Posterior vena cava (tissue), 2 donors: ENCODE measurements at regions of chr14 and their contacts with region 1.

Region 1: DNA sequence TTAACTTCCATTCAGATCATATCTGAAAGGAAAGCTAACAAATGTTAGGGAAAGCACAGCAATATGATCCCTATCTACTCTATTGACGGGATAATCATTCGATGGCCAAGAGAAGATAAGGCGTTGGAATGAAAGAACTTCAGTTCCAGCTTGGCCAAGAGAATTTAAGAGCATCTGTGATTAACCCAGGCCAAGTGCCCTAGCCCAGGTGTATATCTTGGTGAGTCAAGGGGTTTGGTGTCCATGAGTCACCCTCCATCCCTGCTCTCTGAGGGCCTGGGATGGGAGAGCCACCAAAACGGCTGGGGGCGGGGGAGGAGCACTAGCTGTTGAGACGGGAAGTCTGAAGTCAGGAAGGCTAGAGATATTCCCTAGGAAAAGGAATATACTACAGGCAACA is 13.0 kb downstream of the TBPL2 start:
- DNase-seq: no peak

Region 2: DNA sequence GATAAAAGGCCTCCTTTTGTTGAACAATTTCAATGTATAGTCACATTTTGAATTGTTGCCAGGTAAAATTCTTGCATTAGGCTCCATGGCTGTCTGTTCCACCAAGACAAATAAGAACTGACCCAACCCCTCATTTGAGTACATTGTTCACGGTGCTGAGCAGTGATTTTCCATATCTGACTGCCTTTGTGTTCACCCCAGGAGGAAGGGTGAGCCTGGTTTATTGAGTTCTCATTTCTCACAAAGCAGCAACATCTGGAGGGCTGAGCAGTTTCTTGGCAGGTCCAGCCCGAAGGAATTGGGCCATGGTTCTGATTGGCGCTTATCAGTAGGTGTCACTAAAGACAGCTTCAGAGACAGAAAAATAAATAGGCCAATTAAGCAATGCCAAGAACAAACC is 1619.9 kb before region 1 on chr14:
- intact Hi-C with region 1: no loop called
- DNase-seq: no peak

Region 3: DNA sequence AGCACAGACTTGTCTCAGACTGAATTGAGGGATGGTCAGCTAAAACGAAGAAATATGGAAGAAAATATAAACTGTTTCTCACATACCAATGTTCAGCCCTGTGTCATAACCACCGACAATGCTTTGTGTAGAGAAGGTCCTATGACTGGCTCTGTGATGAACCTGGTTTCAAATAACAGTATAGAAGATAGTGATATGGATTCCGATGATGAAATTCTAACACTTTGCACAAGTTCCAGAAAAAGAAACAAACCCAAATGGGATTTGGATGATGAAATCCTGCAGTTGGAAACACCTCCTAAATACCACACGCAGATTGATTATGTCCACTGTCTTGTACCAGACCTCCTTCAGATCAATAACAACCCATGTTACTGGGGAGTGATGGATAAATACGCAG is 383.9 kb before region 1 on chr14:
- intact Hi-C with region 1: no loop called
- DNase-seq: no peak

Region 4: DNA sequence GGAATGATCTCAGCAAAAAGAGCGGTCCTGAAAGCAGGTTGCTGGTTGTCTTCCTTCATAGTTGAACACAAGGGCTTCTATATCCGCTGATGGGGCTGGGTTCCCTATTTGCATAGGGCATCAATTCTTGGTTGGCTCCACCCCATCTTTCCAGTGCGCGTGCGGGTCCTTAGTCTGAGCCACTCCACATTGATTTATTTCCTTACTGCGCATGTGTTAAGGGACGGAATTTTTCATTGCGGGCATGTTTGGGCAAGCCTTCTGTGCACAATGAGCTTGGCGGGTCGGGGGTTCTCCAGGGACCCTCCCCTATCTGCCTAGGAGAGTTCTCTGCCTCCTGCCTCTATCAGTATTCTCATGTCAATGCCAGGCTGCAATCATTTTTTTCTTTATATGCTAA is 214.8 kb before region 1 on chr14:
- intact Hi-C with region 1: loop called in 1 of 2 experiments (anchors 10 kb)
- DNase-seq: no peak